ENCODE measurements at regions of chr7 and their contacts with region 1.

Region 1: GRCh38 chr7:48299580-48300169 is 128.4 kb downstream of the ABCA13 start:
- DNase-seq: peak; percentile 55
- CTCF ChIP-seq: peak; percentile 77

Region 2: GRCh38 chr7:47600199-47601118 is 699.2 kb before region 1 on chr7:
- CTCF ChIA-PET with region 1: no interaction called
- POLR2A ChIA-PET with region 1: no interaction called
- DNase-seq: no peak
- CTCF ChIP-seq: no peak

Region 3: GRCh38 chr7:47786557-47787248 is 513.0 kb before region 1 on chr7:
- CTCF ChIA-PET with region 1: no interaction called
- POLR2A ChIA-PET with region 1: no interaction called
- DNase-seq: no peak
- CTCF ChIP-seq: no peak

Region 4: GRCh38 chr7:48280100-48280499 is 19.6 kb before region 1 on chr7:
- CTCF ChIA-PET with region 1: interaction called, 24 read pairs
- POLR2A ChIA-PET with region 1: no interaction called
- DNase-seq: no peak
- CTCF ChIP-seq: no peak